Natural killer cell (primary cell): ENCODE measurements at regions of chr1 and their contacts with region 1.

Region 1: DNA sequence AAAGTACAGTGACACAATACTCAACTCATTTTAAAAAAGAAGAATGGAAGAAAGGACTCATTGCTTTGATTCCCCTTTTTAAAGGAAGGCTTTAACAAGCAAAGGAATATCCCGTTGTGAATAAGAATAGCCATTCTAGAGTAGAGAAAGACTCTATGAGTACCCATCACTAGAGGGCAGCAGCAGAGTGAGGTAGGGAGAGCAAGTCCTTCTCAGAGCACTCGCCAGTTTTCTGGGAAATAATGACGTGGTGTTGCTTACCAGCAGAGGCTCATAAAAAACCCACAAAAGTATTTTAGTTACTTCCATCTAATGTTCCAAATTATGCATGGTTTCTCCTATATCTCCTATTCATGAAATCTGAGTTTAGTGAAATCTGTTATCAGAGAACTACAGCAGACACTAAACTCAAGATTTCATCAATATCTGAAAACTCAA is 74.6 kb downstream of the USP24 start:
- DNase-seq: peak in 1 of 2 donors; percentile 87
- ATAC-seq: peak; percentile 82 to 86 (median 84)
- H3K4me3 ChIP-seq: no peak overlapping the region
- H3K4me3 Mint-ChIP-seq: peak overlapping the region; percentile 14
- H3K27ac ChIP-seq: peak overlapping the region; percentile 18
- H3K27ac Mint-ChIP-seq: peak overlapping the region in 1 of 2 donors; percentile 86
- H3K4me1 ChIP-seq: no peaks in the 10 kb centered on the region
- H3K4me1 Mint-ChIP-seq: peaks cover 8 to 12% of the 10 kb centered on the region in 2 donors
- H3K27me3 ChIP-seq: no peaks in the 10 kb centered on the region
- H3K27me3 Mint-ChIP-seq: no peaks in the 10 kb centered on the region
- CTCF ChIP-seq: peak; percentile 84

Region 2: GRCh38 chr1:55035904-55036303 is 104.7 kb before region 1 on chr1:
- intact Hi-C with region 1: no loop called
- DNase-seq: no peak
- ATAC-seq: no peak
- H3K4me3 ChIP-seq: no peak overlapping the region
- H3K4me3 Mint-ChIP-seq: no peak overlapping the region
- H3K27ac ChIP-seq: no peak overlapping the region
- H3K27ac Mint-ChIP-seq: no peak overlapping the region
- H3K4me1 ChIP-seq: no peaks in the 10 kb centered on the region
- H3K4me1 Mint-ChIP-seq: peaks cover 0 to 7% of the 10 kb centered on the region in 2 donors
- H3K27me3 ChIP-seq: peaks cover 5% of the 10 kb centered on the region
- H3K27me3 Mint-ChIP-seq: peaks cover 57 to 70% of the 10 kb centered on the region in 2 donors
- CTCF ChIP-seq: no peak

Region 3: DNA sequence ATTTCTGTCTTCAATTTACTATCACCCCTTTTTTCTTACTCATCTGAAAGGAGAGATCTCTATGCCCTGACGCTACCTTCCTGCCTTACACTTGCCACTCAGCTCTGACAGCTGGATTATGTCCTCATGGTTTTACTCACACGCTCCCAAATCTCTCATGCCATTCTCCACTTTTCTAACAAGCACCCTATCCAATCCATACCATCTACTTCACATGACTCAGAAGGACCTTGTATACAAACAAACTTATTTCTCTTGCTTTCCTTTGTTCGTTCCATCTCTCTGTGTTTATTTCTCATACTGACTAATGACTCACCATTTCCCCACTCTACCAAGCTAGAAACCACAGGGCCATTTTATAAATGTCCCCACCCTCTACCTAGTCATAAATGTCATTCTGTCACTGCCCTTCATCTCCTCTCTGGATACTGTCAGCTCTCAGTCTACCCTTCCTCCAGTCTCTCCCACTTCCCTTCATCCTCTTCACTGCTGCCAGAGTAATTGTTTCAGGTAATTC is 12.7 kb before region 1 on chr1:
- intact Hi-C with region 1: loop called (anchors 1 kb)
- DNase-seq: peak in 1 of 2 donors; percentile 43
- ATAC-seq: peak; percentile 82 to 88 (median 84)
- H3K4me3 ChIP-seq: no peak overlapping the region
- H3K4me3 Mint-ChIP-seq: peak overlapping the region; percentile 54
- H3K27ac ChIP-seq: peak overlapping the region; percentile 86
- H3K27ac Mint-ChIP-seq: peak overlapping the region; percentile 75 to 92
- H3K4me1 ChIP-seq: peaks cover 12% of the 10 kb centered on the region
- H3K4me1 Mint-ChIP-seq: peaks cover 44 to 49% of the 10 kb centered on the region in 2 donors
- H3K27me3 ChIP-seq: no peaks in the 10 kb centered on the region
- H3K27me3 Mint-ChIP-seq: no peaks in the 10 kb centered on the region
- CTCF ChIP-seq: no peak

Region 4: DNA sequence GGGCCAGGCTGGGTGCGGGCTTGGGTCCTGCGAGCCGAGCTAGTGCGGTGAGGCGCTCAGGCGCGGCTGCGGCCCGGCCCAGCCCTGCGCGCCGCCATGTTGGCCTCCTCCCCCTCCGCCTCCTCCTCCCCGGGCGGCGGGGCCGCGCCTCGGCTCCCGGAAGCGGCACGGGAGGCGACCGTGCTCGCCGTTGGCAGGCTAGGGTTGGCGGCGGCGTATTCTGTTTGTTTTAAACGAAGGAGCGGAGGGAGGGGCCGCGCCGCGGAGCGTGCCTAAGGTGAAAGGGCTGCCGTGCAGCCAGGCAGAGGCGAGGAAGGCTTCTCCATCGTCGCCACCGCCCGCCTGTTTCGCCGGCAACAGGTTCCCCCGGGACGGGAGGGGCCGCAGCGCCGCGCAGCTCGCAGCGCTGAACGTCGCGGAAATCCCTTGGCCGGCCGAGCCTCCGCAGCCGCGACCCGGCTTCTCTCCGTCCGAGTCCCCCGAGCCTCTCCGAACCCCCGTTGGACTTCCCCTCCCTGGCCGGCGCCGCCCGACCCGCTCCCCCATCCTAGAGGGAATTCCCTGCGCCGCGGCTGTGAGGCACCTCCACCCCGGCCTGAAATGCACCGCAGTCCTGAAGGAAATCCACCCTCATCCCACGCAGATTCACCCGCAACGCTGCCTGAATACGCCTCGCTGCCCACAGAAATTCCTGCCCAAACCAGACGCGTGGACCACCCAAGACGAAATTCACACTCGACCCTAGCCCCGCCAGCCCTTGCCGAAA is 74.9 kb after region 1 on chr1 and contains the start of gene USP24:
- intact Hi-C with region 1: loop called (anchors 2 kb)
- DNase-seq: peak; percentile 76 to 93
- ATAC-seq: peak; percentile 82 to 92 (median 91)
- H3K4me3 ChIP-seq: peak within 1 kb of the TSS; percentile 82
- H3K4me3 Mint-ChIP-seq: peak within 1 kb of the TSS; percentile 97
- H3K27ac ChIP-seq: peak within 1 kb of the TSS; percentile 97
- H3K27ac Mint-ChIP-seq: peak within 1 kb of the TSS; percentile 98 to 99
- H3K4me1 ChIP-seq: peaks cover 34% of the 10 kb centered on the region
- H3K4me1 Mint-ChIP-seq: peaks cover 68 to 69% of the 10 kb centered on the region in 2 donors
- H3K27me3 ChIP-seq: no peaks in the 10 kb centered on the region
- H3K27me3 Mint-ChIP-seq: no peaks in the 10 kb centered on the region
- CTCF ChIP-seq: no peak
- total RNA-seq, gene USP24: 155 TPM

Region 5: DNA sequence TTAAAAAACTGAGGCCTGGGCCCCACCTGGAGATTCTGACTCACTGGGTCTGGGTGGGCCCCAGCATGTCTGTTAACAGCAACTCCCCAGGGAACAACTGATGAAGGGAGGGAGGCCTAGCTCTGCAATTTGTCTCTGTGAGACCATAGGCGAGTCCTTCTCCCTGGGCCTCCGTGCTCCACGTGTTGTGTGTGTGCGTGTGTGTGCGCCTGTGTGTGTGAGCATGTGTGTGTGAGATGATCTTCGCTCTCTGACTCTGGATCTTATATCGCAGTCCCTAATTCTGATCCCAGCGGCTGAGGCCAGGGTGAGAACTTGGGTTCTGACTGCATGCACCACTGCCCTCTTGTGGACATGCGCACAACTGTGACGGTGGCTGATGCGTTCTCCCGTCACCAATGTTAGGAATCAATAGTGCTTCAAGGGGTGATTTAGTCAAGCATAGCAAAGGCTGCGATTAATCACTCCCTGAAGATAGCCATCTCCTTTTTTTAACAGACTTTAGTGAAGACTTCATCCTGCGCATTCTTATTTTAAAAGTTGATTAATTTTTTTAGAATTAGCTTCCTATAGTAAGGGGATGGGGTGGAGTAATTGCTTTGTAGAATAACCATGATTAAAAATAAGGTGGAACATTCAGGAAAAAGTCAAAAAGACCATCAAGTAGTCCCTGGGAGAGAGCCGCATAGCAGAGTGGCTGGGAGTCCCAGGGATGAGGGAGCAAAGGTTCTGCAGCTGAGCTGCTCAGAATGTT is 137.0 kb after region 1 on chr1:
- intact Hi-C with region 1: loop called (anchors 1 kb)
- DNase-seq: peak; percentile 66 to 90
- ATAC-seq: peak; percentile 88 to 97 (median 93)
- H3K4me3 ChIP-seq: no peak overlapping the region
- H3K4me3 Mint-ChIP-seq: no peak overlapping the region
- H3K27ac ChIP-seq: no peak overlapping the region
- H3K27ac Mint-ChIP-seq: peak overlapping the region; percentile 8 to 88
- H3K4me1 ChIP-seq: peaks cover 5% of the 10 kb centered on the region
- H3K4me1 Mint-ChIP-seq: peaks cover 45 to 52% of the 10 kb centered on the region in 2 donors
- H3K27me3 ChIP-seq: no peaks in the 10 kb centered on the region
- H3K27me3 Mint-ChIP-seq: peaks cover 0 to under 1% of the 10 kb centered on the region in 2 donors
- CTCF ChIP-seq: peak; percentile 84

Region 6: GRCh38 chr1:55337801-55338447 is 197.4 kb after region 1 on chr1:
- intact Hi-C with region 1: loop called (anchors 1 kb)
- DNase-seq: peak in 1 of 2 donors; percentile 32
- ATAC-seq: peak in 2 of 3 donors; percentile 51 to 57
- H3K4me3 ChIP-seq: no peak overlapping the region
- H3K4me3 Mint-ChIP-seq: no peak overlapping the region
- H3K27ac ChIP-seq: no peak overlapping the region
- H3K27ac Mint-ChIP-seq: no peak overlapping the region
- H3K4me1 ChIP-seq: no peaks in the 10 kb centered on the region
- H3K4me1 Mint-ChIP-seq: peaks cover 0 to 7% of the 10 kb centered on the region in 2 donors
- H3K27me3 ChIP-seq: no peaks in the 10 kb centered on the region
- H3K27me3 Mint-ChIP-seq: peaks cover 0 to 9% of the 10 kb centered on the region in 2 donors
- CTCF ChIP-seq: peak; percentile 51